ENCODE measurements at regions of chr20 and their contacts with region 1.

Region 1: GRCh38 chr20:2713285-2713684 is 20.7 kb downstream of the EBF4 start:
- DNase-seq: no peak
- ATAC-seq: no peak
- H3K4me3 ChIP-seq: no peak overlapping the region
- H3K27ac ChIP-seq: no peak overlapping the region
- H3K4me1 ChIP-seq: no peaks in the 10 kb centered on the region
- H3K27me3 ChIP-seq: peaks cover 0 to 8% (median 0%) of the 10 kb centered on the region in 7 donors
- CTCF ChIP-seq: peak in 1 of 9 donors; percentile 33

Region 2: DNA sequence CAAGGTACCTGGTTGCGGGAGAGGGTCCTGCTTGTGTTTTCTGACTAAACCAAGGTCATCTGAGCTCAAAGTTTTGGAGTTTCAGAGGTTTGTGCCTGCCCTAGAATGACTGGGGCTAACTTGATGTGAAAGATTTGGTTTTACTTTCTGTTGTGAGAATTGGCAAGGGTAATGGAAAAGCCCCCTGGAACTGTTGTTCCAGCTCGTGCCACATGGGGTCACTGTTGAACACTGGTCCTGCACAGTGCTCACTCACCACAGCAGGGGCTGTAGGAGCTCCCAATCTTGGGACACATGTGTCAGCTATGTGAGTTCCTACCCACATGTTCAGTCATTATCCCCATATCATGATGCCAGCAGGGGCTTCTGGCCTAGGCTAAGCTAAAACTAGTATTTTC is 326.1 kb before region 1 on chr20:
- intact Hi-C with region 1: loop called in 1 of 10 experiments (anchors 10 kb)
- DNase-seq: no peak
- ATAC-seq: no peak
- H3K4me3 ChIP-seq: no peak overlapping the region
- H3K27ac ChIP-seq: no peak overlapping the region
- H3K4me1 ChIP-seq: no peaks in the 10 kb centered on the region
- H3K27me3 ChIP-seq: peaks cover 0 to 13% (median 0%) of the 10 kb centered on the region in 7 donors
- CTCF ChIP-seq: peak in 6 of 9 donors; percentile 21 to 30 (median 26)

Region 3: GRCh38 chr20:2759603-2760296 is 46.5 kb after region 1 on chr20:
- intact Hi-C with region 1: no loop called
- DNase-seq: no peak
- ATAC-seq: no peak
- H3K4me3 ChIP-seq: no peak overlapping the region
- H3K27ac ChIP-seq: no peak overlapping the region
- H3K4me1 ChIP-seq: no peaks in the 10 kb centered on the region
- H3K27me3 ChIP-seq: peaks cover 0 to 84% (median 52%) of the 10 kb centered on the region in 7 donors
- CTCF ChIP-seq: no peak

Measured in heart right ventricle (tissue), 16 donors.